ENCODE measurements at regions of chr7 and their contacts with region 1.

Region 1: DNA sequence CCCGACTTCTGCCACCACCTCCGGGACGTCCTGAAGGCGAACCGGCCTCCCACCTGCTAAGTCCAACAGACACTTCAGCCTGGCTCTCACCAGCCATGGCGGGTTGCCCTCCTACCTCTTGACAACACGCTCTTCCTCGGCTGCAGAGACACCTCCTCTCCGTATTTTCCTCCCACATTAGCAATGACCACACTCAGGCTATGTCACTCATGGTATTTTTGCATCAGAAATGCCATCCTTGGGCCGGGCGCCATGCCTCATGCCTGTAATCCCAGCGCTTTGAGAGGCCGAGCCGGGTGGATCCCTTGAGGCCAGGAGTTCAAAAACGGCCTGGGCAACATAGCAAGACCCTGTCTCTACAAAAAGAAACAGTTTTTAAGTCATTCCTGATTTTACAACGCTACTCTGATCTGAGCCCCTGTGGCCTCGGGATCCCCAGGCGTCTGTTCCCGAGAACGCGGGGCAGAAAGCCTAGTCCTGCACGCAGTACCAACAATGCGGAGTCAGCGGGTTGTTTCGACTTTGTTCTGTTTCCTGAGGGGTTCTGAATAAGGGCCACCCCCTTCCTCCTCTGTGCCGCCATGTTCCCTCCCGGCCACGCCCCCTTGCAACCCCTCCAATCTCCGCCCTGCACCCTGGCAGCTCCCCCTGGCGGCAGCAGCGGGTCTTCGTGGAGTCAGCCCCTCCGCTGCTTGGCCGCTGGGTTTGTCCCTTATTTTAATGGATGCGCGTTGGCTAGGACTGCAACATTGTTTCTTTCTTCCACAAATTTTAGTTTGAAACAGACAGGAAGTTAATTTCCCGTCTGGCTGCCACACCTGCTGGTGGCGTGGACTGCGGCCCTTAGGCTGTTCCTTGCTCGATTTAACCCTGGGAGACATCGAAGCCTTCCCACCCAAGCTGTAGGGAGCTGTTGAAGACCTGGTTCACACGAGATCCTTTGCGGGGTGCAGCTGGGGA is 9.7 kb upstream of the ZFAND2A start:
- DNase-seq: peak; percentile 93 to 96 (median 94)
- ATAC-seq: peak; percentile 99
- H3K4me3 ChIP-seq: peak overlapping the region; percentile 68
- H3K27ac ChIP-seq: peak overlapping the region; percentile 82
- H3K4me1 ChIP-seq: peaks cover 3 to 16% of the 10 kb centered on the region in 2 experiments; a peak in 4 of 5 replicates
- H3K27me3 ChIP-seq: no peaks in the 10 kb centered on the region
- CTCF ChIP-seq: peak; percentile 94 to 97 (median 95)
- EP300 ChIP-seq: no peak
- POLR2A ChIP-seq: peak; percentile 84
- RAD21 ChIP-seq: peak; percentile 40 to 69

Region 2: GRCh38 chr7:1028031-1028770 is 141.5 kb before region 1 on chr7:
- CTCF ChIA-PET with region 1: no interaction called
- POLR2A ChIA-PET with region 1: no interaction called
- in situ Hi-C with region 1: no loop called
- intact Hi-C with region 1: no loop called
- DNase-seq: peak; percentile 94 to 98 (median 97)
- ATAC-seq: peak; percentile 94
- H3K4me3 ChIP-seq: peak overlapping the region; percentile 72
- H3K27ac ChIP-seq: peak overlapping the region; percentile 88
- H3K4me1 ChIP-seq: peaks cover 13 to 82% of the 10 kb centered on the region in 2 experiments
- H3K27me3 ChIP-seq: no peaks in the 10 kb centered on the region
- CTCF ChIP-seq: no peak
- EP300 ChIP-seq: no peak
- POLR2A ChIP-seq: no peak
- RAD21 ChIP-seq: no peak

Region 3: GRCh38 chr7:1086588-1087464 is 82.9 kb before region 1 on chr7:
- CTCF ChIA-PET with region 1: no interaction called
- POLR2A ChIA-PET with region 1: interaction called, 5 read pairs
- in situ Hi-C with region 1: no loop called
- intact Hi-C with region 1: loop called (anchors 2 kb)
- DNase-seq: peak; percentile 81 to 90 (median 88)
- ATAC-seq: peak; percentile 97
- H3K4me3 ChIP-seq: peak overlapping the region; percentile 33
- H3K27ac ChIP-seq: no peak overlapping the region
- H3K4me1 ChIP-seq: peaks cover 3 to 57% of the 10 kb centered on the region in 2 experiments; a peak in 3 of 5 replicates
- H3K27me3 ChIP-seq: no peaks in the 10 kb centered on the region
- CTCF ChIP-seq: peak; percentile 82 to 91 (median 83)
- EP300 ChIP-seq: no peak
- POLR2A ChIP-seq: no peak
- RAD21 ChIP-seq: peak; percentile 57 to 61